Transverse colon (tissue), 4 donors: ENCODE measurements at regions of chr5 and their contacts with region 1.

Region 1: GRCh38 chr5:28666110-28666509 is 1627.7 kb upstream of the CDH9 start:
- DNase-seq: no peak
- H3K4me3 ChIP-seq: no peak overlapping the region
- H3K27ac ChIP-seq: no peak overlapping the region
- H3K4me1 ChIP-seq: no peaks in the 10 kb centered on the region
- H3K27me3 ChIP-seq: no peaks in the 10 kb centered on the region
- CTCF ChIP-seq: no peak
- EP300 ChIP-seq: no peak
- POLR2A ChIP-seq: no peak

Region 2: GRCh38 chr5:28542987-28543386 is 123.1 kb before region 1 on chr5:
- in situ Hi-C with region 1: no loop called
- intact Hi-C with region 1: no loop called
- DNase-seq: no peak
- H3K4me3 ChIP-seq: no peak overlapping the region
- H3K27ac ChIP-seq: no peak overlapping the region
- H3K4me1 ChIP-seq: no peaks in the 10 kb centered on the region
- H3K27me3 ChIP-seq: no peaks in the 10 kb centered on the region
- CTCF ChIP-seq: no peak
- EP300 ChIP-seq: no peak
- POLR2A ChIP-seq: no peak

Region 3: GRCh38 chr5:28632607-28633006 is 33.5 kb before region 1 on chr5:
- in situ Hi-C with region 1: no loop called
- intact Hi-C with region 1: loop called (anchors 2 kb)
- DNase-seq: no peak
- H3K4me3 ChIP-seq: no peak overlapping the region
- H3K27ac ChIP-seq: no peak overlapping the region
- H3K4me1 ChIP-seq: no peaks in the 10 kb centered on the region
- H3K27me3 ChIP-seq: no peaks in the 10 kb centered on the region
- CTCF ChIP-seq: no peak
- EP300 ChIP-seq: no peak
- POLR2A ChIP-seq: no peak